ENCODE measurements at regions of chr4 and their contacts with region 1.

Region 1: GRCh38 chr4:106315968-106316772 is at the starts of genes AIMP1 and TBCK:
- DNase-seq: peak; percentile 84
- H3K4me3 Mint-ChIP-seq: no peak within 1 kb of the TSS
- H3K27ac Mint-ChIP-seq: peak within 1 kb of the TSS; percentile 91
- H3K4me1 Mint-ChIP-seq: peaks cover 23% of the 10 kb centered on the region
- H3K27me3 Mint-ChIP-seq: no peaks in the 10 kb centered on the region
- total RNA-seq, gene AIMP1: 72.1 and 72.5 TPM in 2 replicates
- total RNA-seq, gene TBCK: 28.5 and 29.8 TPM in 2 replicates

Region 2: GRCh38 chr4:105708530-105709391 is 607.4 kb before region 1 on chr4 and contains the starts of genes GSTCD and INTS12:
- intact Hi-C with region 1: loop called (anchors 5 kb)
- DNase-seq: peak; percentile 82
- H3K4me3 Mint-ChIP-seq: peak within 1 kb of the TSS; percentile 98
- H3K27ac Mint-ChIP-seq: peak within 1 kb of the TSS; percentile 94
- H3K4me1 Mint-ChIP-seq: peaks cover 26% of the 10 kb centered on the region
- H3K27me3 Mint-ChIP-seq: no peaks in the 10 kb centered on the region
- total RNA-seq, gene GSTCD: 15.7 and 16.7 TPM in 2 replicates
- total RNA-seq, gene INTS12: 18.5 and 22.0 TPM in 2 replicates

Region 3: DNA sequence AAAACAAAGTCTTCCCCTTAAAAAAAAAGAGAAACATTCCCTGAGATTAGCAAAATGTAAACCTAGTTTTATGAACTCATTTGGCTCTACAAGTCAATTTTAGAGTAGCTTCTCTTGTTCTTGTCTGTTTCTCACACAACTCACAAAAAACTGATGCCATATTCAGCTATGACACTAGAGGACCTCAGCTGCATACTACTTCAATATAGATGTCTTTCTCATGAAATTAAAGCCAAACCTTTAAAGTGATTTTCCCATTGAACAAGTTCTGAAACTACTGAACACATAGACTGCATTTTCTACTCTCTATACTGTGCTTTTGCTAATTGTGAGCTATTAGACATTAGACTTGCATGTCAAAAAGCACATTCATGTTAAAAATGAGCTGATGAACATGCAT is 50.0 kb before region 1 on chr4:
- intact Hi-C with region 1: loop called (anchors 2 kb)
- DNase-seq: no peak
- H3K4me3 Mint-ChIP-seq: no peak overlapping the region
- H3K27ac Mint-ChIP-seq: no peak overlapping the region
- H3K4me1 Mint-ChIP-seq: peaks cover 2% of the 10 kb centered on the region
- H3K27me3 Mint-ChIP-seq: no peaks in the 10 kb centered on the region

Region 4: DNA sequence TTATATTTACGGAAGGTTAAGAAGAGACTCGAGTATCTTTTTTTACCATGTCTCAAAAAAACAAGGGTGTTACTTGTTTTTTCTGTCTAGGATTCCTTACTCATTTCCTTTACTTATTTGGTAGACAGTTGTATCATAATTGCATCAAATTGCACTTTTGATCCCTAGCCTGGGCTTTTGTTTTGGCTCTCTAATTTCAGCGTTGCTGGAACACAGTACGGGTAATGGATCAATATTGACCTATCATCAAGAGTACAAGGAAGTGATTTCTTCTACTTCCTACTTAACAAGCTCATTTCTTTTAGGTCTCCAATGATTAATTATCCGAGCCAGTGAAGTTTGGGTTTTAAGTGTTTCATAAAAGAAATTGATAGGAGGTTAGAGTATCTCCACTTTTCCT is 17.0 kb after region 1 on chr4:
- intact Hi-C with region 1: loop called (anchors 2 kb)
- DNase-seq: no peak
- H3K4me3 Mint-ChIP-seq: no peak overlapping the region
- H3K27ac Mint-ChIP-seq: no peak overlapping the region
- H3K4me1 Mint-ChIP-seq: peaks cover 9% of the 10 kb centered on the region
- H3K27me3 Mint-ChIP-seq: no peaks in the 10 kb centered on the region

Region 5: DNA sequence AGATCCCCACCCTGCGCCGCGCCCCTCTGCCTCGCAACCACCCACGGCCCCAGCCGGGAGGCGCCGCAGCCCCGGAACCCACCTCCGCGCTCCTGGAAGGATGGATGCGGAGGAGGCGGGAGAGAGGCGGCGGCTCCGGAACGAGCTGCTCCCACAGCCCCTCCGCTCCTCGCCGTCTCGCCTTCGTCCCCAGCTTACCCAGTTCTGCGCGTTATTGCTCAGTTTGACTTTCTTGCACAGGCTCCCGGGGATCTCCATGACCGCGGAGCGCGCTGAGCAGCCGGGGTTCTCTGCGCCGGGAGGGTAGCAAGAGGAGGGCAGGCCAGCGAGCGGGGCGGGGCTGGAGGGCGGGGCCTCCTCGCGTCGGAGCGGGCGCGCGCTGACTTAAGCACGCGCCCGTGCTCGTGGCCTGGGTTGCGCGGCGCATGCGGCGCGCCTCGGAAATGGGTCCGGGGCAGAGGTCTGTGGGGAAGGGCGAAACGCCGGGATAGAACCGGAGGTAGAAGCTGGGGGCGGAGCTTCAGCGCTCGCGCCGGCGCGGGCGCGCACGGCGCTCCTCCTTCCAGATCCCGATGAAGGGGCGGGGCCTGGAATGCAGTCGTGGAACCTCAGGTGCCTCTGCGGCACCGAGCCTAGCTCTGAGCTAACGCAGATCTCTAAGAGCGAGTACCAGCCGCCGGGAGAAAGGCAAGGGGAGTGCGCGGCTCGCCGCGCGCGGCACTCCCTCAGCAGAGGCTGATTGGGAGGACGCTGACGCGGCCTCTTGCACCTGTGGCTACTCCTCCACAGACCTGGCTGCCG is 1404.0 kb after region 1 on chr4 and contains the start of gene PAPSS1:
- intact Hi-C with region 1: loop called (anchors 1 kb)
- DNase-seq: peak; percentile 92
- H3K4me3 Mint-ChIP-seq: peak within 1 kb of the TSS; percentile 91
- H3K27ac Mint-ChIP-seq: peak within 1 kb of the TSS; percentile 87
- H3K4me1 Mint-ChIP-seq: peaks cover 27% of the 10 kb centered on the region
- H3K27me3 Mint-ChIP-seq: no peaks in the 10 kb centered on the region
- total RNA-seq, gene PAPSS1: 36.9 TPM in 2 replicates